CD4-positive, alpha-beta T cell (primary cell): ENCODE measurements at regions of chr12 and their contacts with region 1.

Region 1: DNA sequence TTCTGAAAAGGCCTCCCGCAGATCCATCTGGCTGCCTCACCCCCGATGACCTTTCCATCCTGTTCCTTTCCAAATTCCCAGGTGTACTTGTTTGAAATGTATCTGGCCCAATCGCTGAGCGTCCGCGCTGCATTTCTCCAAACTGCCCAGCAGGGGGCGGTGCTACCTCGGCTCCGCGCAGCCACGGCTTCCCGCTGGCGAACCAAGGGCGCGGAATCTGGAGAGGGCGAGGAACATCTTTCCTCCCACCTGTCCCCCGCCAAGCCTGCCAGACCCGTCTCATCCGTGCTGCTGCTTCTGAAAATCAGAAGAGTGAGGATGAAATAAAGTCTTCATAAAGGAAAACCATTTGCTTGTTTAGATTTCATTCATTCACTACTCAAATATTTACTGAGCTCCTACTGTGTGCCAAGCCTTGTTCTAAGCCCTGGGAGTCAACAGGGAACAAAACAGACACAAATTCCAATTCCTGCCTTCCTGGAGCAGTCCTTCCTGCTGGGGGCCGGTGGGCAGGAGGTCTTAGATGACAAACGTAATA is 16.8 kb upstream of the MYL2 start:
- DNase-seq: peak; percentile 16 to 79 (median 45)
- ATAC-seq: peak; percentile 55
- H3K4me3 ChIP-seq: no peak overlapping the region
- H3K4me3 Mint-ChIP-seq: no peak overlapping the region
- H3K27ac ChIP-seq: no peak overlapping the region
- H3K27ac Mint-ChIP-seq: no peak overlapping the region
- H3K4me1 ChIP-seq: peaks cover 6% of the 10 kb centered on the region
- H3K4me1 Mint-ChIP-seq: no peaks in the 10 kb centered on the region
- H3K27me3 ChIP-seq: peaks cover 0 to 4% of the 10 kb centered on the region in 2 experiments
- H3K27me3 Mint-ChIP-seq: peaks cover 35% of the 10 kb centered on the region
- CTCF ChIP-seq: peak; percentile 98

Region 2: GRCh38 chr12:111174251-111174960 is 237.2 kb after region 1 on chr12:
- CTCF ChIA-PET with region 1: no interaction called
- POLR2A ChIA-PET with region 1: no interaction called
- intact Hi-C with region 1: loop called (anchors 1 to 10 kb)
- DNase-seq: peak in 3 of 14 experiments; percentile 10 to 38 (median 31)
- ATAC-seq: no peak
- H3K4me3 ChIP-seq: no peak overlapping the region
- H3K4me3 Mint-ChIP-seq: no peak overlapping the region
- H3K27ac ChIP-seq: no peak overlapping the region
- H3K27ac Mint-ChIP-seq: no peak overlapping the region
- H3K4me1 ChIP-seq: peaks cover 3% of the 10 kb centered on the region
- H3K4me1 Mint-ChIP-seq: no peaks in the 10 kb centered on the region
- H3K27me3 ChIP-seq: peaks cover 0 to 11% of the 10 kb centered on the region in 2 experiments
- H3K27me3 Mint-ChIP-seq: peaks cover 39% of the 10 kb centered on the region
- CTCF ChIP-seq: peak; percentile 30

Region 3: GRCh38 chr12:111271674-111272418 is 334.7 kb after region 1 on chr12:
- CTCF ChIA-PET with region 1: interaction called, 3 read pairs
- POLR2A ChIA-PET with region 1: no interaction called
- intact Hi-C with region 1: loop called (anchors 1 to 2 kb)
- DNase-seq: peak in 4 of 14 experiments; percentile 6 to 22 (median 16)
- ATAC-seq: no peak
- H3K4me3 ChIP-seq: no peak overlapping the region
- H3K4me3 Mint-ChIP-seq: no peak overlapping the region
- H3K27ac ChIP-seq: no peak overlapping the region
- H3K27ac Mint-ChIP-seq: no peak overlapping the region
- H3K4me1 ChIP-seq: no peaks in the 10 kb centered on the region
- H3K4me1 Mint-ChIP-seq: no peaks in the 10 kb centered on the region
- H3K27me3 ChIP-seq: peaks cover 0 to 4% of the 10 kb centered on the region in 2 experiments
- H3K27me3 Mint-ChIP-seq: peaks cover 13% of the 10 kb centered on the region
- CTCF ChIP-seq: peak; percentile 14

Region 4: DNA sequence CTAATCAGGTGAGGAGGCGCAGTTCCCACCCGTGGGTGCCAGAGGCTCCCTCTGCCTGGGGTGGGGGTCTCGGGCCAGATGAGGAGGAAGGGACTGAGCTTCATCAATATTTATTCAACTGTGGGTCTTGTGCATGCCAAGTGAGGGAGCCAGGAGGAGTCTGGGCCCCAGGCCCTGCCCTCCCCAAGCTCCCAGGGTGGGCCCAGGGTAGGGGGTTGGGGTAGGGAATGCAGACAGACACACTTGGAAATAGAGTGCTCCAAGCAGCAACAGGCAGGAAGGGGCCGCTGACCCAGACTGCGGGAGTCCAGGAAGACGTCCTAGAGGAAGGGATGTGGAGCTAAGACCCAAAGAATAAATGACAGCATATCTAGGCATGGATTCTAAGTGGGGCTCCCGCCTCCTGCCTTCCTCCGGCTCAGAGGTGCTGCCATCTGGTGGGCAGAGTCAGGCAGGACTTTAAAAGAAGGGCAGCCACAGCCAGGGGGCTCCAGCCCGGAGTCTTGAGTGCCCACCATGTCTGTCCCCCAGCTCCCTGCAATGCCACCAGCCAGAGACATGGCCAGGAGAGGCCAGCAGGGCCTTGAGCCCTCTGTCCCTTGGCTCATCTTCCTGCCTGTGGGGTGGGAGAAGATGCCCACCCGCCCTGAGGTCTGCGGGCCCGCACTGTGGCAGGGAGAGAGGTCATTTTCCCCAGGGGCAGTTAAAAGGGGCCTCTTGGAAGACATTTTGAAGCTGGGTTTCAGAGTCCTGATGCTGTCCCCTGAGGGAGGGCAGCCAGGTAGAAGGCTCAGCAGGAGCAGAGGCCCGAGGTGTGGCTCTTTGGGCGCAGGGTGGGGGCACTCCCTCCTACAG is 361.6 kb after region 1 on chr12:
- CTCF ChIA-PET with region 1: no interaction called
- POLR2A ChIA-PET with region 1: no interaction called
- intact Hi-C with region 1: loop called (anchors 2 to 5 kb)
- DNase-seq: peak; percentile 13 to 63 (median 34)
- ATAC-seq: peak; percentile 41
- H3K4me3 ChIP-seq: no peak overlapping the region
- H3K4me3 Mint-ChIP-seq: no peak overlapping the region
- H3K27ac ChIP-seq: no peak overlapping the region
- H3K27ac Mint-ChIP-seq: no peak overlapping the region
- H3K4me1 ChIP-seq: no peaks in the 10 kb centered on the region
- H3K4me1 Mint-ChIP-seq: no peaks in the 10 kb centered on the region
- H3K27me3 ChIP-seq: peaks cover 0 to 2% of the 10 kb centered on the region in 2 experiments
- H3K27me3 Mint-ChIP-seq: peaks cover 4% of the 10 kb centered on the region
- CTCF ChIP-seq: peak; percentile 53

Region 5: GRCh38 chr12:111313833-111314259 is 376.7 kb after region 1 on chr12:
- CTCF ChIA-PET with region 1: no interaction called
- POLR2A ChIA-PET with region 1: no interaction called
- intact Hi-C with region 1: loop called (anchors 1 kb)
- DNase-seq: peak; percentile 55 to 83 (median 69)
- ATAC-seq: peak; percentile 54
- H3K4me3 ChIP-seq: no peak overlapping the region
- H3K4me3 Mint-ChIP-seq: no peak overlapping the region
- H3K27ac ChIP-seq: no peak overlapping the region
- H3K27ac Mint-ChIP-seq: no peak overlapping the region
- H3K4me1 ChIP-seq: peaks cover 8% of the 10 kb centered on the region
- H3K4me1 Mint-ChIP-seq: peaks cover 12% of the 10 kb centered on the region
- H3K27me3 ChIP-seq: no peaks in the 10 kb centered on the region
- H3K27me3 Mint-ChIP-seq: peaks cover 17% of the 10 kb centered on the region
- CTCF ChIP-seq: peak; percentile 92